ENCODE measurements at regions of chr2 and their contacts with region 1.

Region 1: DNA sequence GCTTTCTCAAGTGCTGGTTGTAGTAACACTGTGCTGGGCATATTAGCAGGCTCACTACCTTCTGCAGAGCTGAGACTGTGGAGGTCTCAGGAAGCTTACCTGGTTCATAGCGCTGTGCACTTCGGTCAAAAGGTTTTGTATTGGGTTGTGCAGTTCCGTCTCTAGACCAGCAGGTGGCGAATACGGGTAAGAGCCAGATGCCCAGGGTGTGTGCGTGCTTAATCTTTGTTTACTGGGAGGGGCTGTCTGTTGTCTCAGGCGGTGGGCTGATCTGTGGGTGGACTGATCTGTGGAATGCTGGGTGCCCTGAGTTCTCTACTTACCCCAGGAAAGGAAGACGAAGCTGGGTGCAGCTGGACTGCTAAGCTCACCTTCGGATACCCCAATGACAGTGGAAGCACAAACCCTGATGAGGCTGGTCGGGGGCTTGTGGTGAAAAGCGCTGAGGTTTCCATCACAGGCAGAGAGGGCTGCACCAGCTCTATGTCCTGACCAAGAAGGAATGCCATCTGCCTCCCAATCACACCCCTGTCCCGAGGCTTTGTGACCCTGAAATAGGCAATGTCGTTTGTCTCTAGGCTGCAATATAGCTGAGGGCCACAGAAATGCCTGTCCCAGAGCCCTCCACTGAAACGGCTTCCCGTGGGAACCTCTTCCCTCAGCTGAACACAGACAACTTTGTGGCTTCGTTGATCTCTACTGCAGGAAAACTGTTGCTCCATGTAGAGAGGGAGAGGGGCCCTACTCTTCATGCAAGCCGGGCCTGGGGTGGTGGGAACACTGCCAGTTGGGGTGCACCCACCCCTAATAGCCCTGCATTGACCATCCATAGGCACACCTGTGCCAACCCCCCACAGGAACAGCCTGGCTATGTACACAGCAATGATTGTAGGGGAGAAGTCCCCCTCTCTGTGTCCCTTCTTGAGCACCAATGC is 45.9 kb upstream of the FAM117B start:
- DNase-seq: peak; percentile 57
- H3K4me3 ChIP-seq: no peak overlapping the region
- H3K27ac ChIP-seq: no peak overlapping the region
- H3K4me1 ChIP-seq: peaks cover 3% of the 10 kb centered on the region
- H3K27me3 ChIP-seq: no peaks in the 10 kb centered on the region
- CTCF ChIP-seq: peak; percentile 89 to 94

Region 2: GRCh38 chr2:202718614-202719013 is 129.7 kb after region 1 on chr2:
- CTCF ChIA-PET with region 1: no interaction called
- dilution Hi-C with region 1: no loop called
- in situ Hi-C with region 1: no loop called
- intact Hi-C with region 1: loop called (anchors 1 kb)
- DNase-seq: peak; percentile 47
- H3K4me3 ChIP-seq: no peak overlapping the region
- H3K27ac ChIP-seq: no peak overlapping the region
- H3K4me1 ChIP-seq: peaks cover 23% of the 10 kb centered on the region
- H3K27me3 ChIP-seq: no peaks in the 10 kb centered on the region
- CTCF ChIP-seq: no peak

Region 3: GRCh38 chr2:202831242-202832220 is 242.6 kb after region 1 on chr2:
- CTCF ChIA-PET with region 1: no interaction called
- dilution Hi-C with region 1: no loop called
- in situ Hi-C with region 1: no loop called
- intact Hi-C with region 1: loop called (anchors 5 kb)
- DNase-seq: peak; percentile 64
- H3K4me3 ChIP-seq: no peak overlapping the region
- H3K27ac ChIP-seq: no peak overlapping the region
- H3K4me1 ChIP-seq: no peaks in the 10 kb centered on the region
- H3K27me3 ChIP-seq: no peaks in the 10 kb centered on the region
- CTCF ChIP-seq: peak; percentile 66 to 70